G401 (cell line): ENCODE measurements at regions of chr4 and their contacts with region 1.

Region 1: DNA sequence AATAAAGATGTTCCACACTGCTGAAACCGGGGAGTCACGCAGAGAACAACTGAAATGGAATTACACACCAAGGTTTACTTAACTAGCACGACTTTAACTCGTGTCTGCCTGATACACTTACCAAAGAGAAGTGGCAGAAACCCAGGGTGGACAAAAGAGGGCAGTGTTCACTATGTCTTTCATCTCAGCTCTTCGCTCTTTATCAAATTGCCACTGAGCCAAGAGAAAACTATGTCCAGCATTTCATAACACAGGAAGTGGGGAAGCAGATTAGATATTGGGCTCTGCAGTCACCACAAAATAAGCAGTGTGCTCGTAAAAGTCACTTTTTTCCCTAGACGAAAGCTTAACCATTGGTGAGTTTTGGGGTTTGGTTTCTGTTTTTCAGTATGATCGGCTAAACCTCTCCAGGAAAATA is 155.7 kb downstream of the CHIC2 start:
- DNase-seq: peak; percentile 67

Region 2: GRCh38 chr4:53015681-53016080 is 893.0 kb before region 1 on chr4:
- in situ Hi-C with region 1: loop called (anchors 25 kb)
- DNase-seq: peak; percentile 27